Left lung (tissue), 14 donors: ENCODE measurements at regions of chr21 and their contacts with region 1.

Region 1: DNA sequence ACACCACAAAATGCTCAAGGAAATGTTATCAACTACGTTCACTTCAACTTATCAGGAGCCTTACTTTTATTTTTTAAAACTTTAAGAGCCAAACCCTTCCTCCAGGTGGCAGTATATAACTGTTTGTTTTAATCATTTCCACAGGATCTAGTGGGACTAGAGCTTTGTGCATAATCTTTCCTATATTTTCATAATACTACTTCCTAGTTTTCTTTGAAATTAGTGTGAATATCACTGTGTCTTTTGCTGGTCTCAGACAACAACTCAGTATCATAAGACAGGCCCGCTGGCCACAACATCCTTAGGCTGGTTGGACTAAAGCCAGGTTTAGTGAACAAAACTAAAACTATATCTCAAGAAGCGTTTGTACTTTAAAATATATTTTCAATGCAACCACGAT is 145.5 kb downstream of the TIAM1 start:
- DNase-seq: peak in 1 of 4 donors; percentile 65
- ATAC-seq: peak; percentile 77
- H3K4me3 ChIP-seq: no peak overlapping the region
- H3K27ac ChIP-seq: no peak overlapping the region
- H3K4me1 ChIP-seq: peaks cover 0 to 19% of the 10 kb centered on the region in 2 donors
- H3K27me3 ChIP-seq: no peaks in the 10 kb centered on the region
- CTCF ChIP-seq: peak; percentile 48 to 56

Region 2: DNA sequence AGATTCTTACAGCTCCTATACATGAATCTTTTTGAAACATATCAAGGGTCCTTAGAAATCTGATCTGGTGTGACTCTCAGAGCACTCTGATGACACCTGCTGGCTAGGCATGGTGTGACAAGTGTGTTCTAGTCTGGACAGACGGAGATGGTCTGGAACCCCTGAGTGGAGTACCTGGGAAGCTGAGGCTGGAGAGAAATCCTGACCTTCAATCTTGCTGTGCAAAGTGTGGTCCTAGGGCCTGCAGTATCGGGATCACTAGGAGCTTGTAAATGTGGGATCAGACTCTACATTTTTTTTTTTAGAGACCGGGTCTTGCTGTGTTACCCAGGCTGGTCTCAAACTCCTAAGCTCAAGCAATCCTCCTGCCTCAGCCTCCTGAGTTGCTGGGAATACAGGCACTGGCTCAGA is 382.3 kb after region 1 on chr21:
- intact Hi-C with region 1: loop called in 1 of 2 experiments (anchors 10 kb)
- DNase-seq: peak in 3 of 4 donors; percentile 54 to 80 (median 61)
- ATAC-seq: peak; percentile 97
- H3K4me3 ChIP-seq: no peak overlapping the region
- H3K27ac ChIP-seq: no peak overlapping the region
- H3K4me1 ChIP-seq: no peaks in the 10 kb centered on the region
- H3K27me3 ChIP-seq: no peaks in the 10 kb centered on the region
- CTCF ChIP-seq: peak; percentile 65 to 72

Region 3: GRCh38 chr21:31604591-31605190 is 406.1 kb after region 1 on chr21:
- intact Hi-C with region 1: loop called in 1 of 2 experiments (anchors 10 kb)
- DNase-seq: peak; percentile 56 to 82 (median 70)
- ATAC-seq: peak; percentile 85
- H3K4me3 ChIP-seq: no peak overlapping the region
- H3K27ac ChIP-seq: no peak overlapping the region
- H3K4me1 ChIP-seq: no peaks in the 10 kb centered on the region
- H3K27me3 ChIP-seq: no peaks in the 10 kb centered on the region
- CTCF ChIP-seq: peak; percentile 88 to 93